ENCODE measurements at regions of chr11 and their contacts with region 1.

Region 1: DNA sequence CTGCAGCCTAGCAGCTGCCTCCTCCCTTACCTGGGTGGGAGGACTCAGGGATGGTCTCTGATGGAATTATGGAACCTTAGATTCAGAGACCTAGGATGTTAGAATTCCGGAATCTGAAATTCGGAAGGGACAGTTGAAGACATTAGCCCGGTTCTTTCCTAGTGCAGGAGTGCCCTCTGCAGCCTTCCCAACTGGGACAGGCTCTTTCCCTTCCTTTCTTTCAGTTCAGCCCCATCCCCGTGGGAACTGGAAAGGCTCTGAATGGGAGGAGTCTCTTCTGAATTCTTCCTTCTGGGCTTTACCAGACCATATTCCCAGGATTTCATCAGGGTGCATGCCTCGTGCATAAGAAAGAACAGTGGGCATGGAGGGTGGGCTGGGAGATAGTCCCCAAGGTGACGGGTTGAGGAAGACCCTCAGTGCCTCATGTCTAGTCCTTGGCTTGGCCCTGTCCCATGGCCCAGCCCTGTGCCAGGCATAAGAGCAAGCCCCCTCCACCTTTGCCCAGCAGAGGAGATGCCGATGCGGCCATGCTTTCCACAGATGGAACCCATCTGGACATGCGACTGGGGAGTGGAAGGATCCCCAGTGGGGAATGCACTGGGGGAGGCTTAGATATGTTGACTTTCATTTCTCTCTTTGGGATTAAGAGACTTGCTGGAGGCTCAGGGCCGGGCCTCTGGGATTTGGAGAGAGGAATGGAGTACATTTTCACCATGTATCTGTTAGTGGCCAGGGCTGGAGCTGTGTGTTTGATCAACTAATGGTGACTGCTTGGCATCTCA is 14.4 kb downstream of the DNAJB13 start:
- DNase-seq: peak in 2 of 9 experiments; percentile 8 to 14
- ATAC-seq: no peak
- H3K4me3 ChIP-seq: no peak overlapping the region
- H3K4me3 Mint-ChIP-seq: no peak overlapping the region
- H3K27ac ChIP-seq: no peak overlapping the region
- H3K27ac Mint-ChIP-seq: peak overlapping the region; percentile 78
- H3K4me1 ChIP-seq: peaks cover 51% of the 10 kb centered on the region
- H3K4me1 Mint-ChIP-seq: peaks cover 44% of the 10 kb centered on the region
- H3K27me3 ChIP-seq: no peaks in the 10 kb centered on the region
- H3K27me3 Mint-ChIP-seq: no peaks in the 10 kb centered on the region
- CTCF ChIP-seq: no peak

Region 2: GRCh38 chr11:74004759-74005615 is 39.7 kb after region 1 on chr11:
- CTCF ChIA-PET with region 1: interaction called, 14 read pairs
- POLR2A ChIA-PET with region 1: interaction called, 428 read pairs
- intact Hi-C with region 1: loop called in 1 of 2 experiments (anchors 1 kb)
- DNase-seq: peak; percentile 71 to 96 (median 88)
- ATAC-seq: peak; percentile 99
- H3K4me3 ChIP-seq: peak overlapping the region; percentile 20 to 36
- H3K4me3 Mint-ChIP-seq: peak overlapping the region; percentile 79
- H3K27ac ChIP-seq: peak overlapping the region; percentile 68 to 77
- H3K27ac Mint-ChIP-seq: peak overlapping the region; percentile 95
- H3K4me1 ChIP-seq: peaks cover 72% of the 10 kb centered on the region
- H3K4me1 Mint-ChIP-seq: peaks cover 77% of the 10 kb centered on the region
- H3K27me3 ChIP-seq: no peaks in the 10 kb centered on the region
- H3K27me3 Mint-ChIP-seq: no peaks in the 10 kb centered on the region
- CTCF ChIP-seq: no peak

Region 3: GRCh38 chr11:74024261-74025029 is 59.2 kb after region 1 on chr11:
- CTCF ChIA-PET with region 1: interaction called, 15 read pairs
- POLR2A ChIA-PET with region 1: interaction called, 10 read pairs
- intact Hi-C with region 1: no loop called
- DNase-seq: peak in 1 of 9 experiments; percentile 27
- ATAC-seq: no peak
- H3K4me3 ChIP-seq: no peak overlapping the region
- H3K4me3 Mint-ChIP-seq: no peak overlapping the region
- H3K27ac ChIP-seq: no peak overlapping the region
- H3K27ac Mint-ChIP-seq: no peak overlapping the region
- H3K4me1 ChIP-seq: peaks cover 16% of the 10 kb centered on the region
- H3K4me1 Mint-ChIP-seq: peaks cover 6% of the 10 kb centered on the region
- H3K27me3 ChIP-seq: no peaks in the 10 kb centered on the region
- H3K27me3 Mint-ChIP-seq: no peaks in the 10 kb centered on the region
- CTCF ChIP-seq: no peak

Region 4: DNA sequence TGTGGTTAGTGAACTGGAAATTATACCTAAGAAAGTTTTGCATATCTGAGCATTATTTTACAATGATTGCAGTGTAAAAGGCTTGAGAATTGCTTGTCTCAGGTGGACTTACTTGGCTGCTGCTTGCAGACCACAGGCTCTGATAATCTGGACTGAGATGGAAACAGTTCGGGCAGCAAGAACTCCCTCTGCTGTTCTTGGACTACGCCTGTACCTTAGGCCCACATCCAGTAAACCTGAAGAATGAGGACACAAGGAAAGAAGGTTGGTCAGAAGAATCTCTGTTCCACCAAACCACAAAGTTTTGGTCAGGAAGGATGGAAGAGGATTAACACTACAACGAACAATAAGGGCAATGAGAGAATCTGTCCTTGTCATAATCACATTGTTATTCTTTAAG is 125.4 kb after region 1 on chr11:
- CTCF ChIA-PET with region 1: interaction called, 6 read pairs
- POLR2A ChIA-PET with region 1: no interaction called
- intact Hi-C with region 1: loop called (anchors 1 to 2 kb)
- DNase-seq: peak in 2 of 9 experiments; percentile 23 to 33
- ATAC-seq: no peak
- H3K4me3 ChIP-seq: no peak overlapping the region
- H3K4me3 Mint-ChIP-seq: no peak overlapping the region
- H3K27ac ChIP-seq: no peak overlapping the region
- H3K27ac Mint-ChIP-seq: no peak overlapping the region
- H3K4me1 ChIP-seq: no peaks in the 10 kb centered on the region
- H3K4me1 Mint-ChIP-seq: no peaks in the 10 kb centered on the region
- H3K27me3 ChIP-seq: no peaks in the 10 kb centered on the region
- H3K27me3 Mint-ChIP-seq: no peaks in the 10 kb centered on the region
- CTCF ChIP-seq: no peak

Measured in CD8-positive, alpha-beta T cell (primary cell).